AG04450 (cell line): ENCODE measurements at regions of chr1 and their contacts with region 1.

Region 1: DNA sequence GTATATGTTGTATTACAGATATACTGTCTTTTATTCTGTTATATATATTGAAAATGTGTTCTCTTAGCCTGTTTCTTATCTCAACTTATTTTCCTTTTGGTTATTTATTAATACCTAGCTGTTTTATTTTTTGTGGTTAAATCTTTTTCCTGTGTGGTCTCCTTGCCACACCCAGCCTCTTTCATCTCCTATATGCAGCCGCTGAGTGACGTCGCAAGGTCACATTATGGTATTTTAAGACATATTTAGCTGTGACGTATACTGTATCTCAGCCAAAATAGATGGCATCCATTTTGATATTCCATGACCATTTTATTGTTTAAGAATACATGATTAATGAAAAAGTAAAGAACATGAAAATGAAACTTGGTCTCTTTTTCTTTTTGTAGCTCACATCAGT is 29.1 kb downstream of the CENPF start:
- DNase-seq: no peak
- H3K4me3 ChIP-seq: no peak overlapping the region
- H3K27ac ChIP-seq: no peak overlapping the region
- H3K27me3 ChIP-seq: no peaks in the 10 kb centered on the region
- CTCF ChIP-seq: no peak

Region 2: DNA sequence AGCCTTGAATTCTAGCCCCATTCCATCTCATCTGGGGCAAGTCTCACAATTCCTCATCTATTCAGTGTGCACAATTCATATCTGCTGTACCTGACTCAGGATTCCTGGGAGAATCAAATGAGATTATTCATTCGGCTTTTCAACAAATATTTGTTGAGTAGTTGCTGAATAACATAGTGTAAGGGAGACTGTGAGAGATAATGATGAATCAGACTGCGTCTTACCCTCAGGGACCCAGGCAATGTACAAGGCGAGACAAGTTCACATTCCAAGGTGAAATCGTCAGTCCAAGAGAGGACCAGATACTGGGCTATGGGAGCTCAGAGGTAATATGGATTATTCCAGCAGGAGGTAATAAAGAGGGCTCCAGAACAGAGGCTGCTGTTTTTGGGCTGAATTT is 419.0 kb before region 1 on chr1:
- CTCF ChIA-PET with region 1: interaction called, 12 read pairs
- POLR2A ChIA-PET with region 1: no interaction called
- DNase-seq: no peak
- H3K4me3 ChIP-seq: no peak overlapping the region
- H3K27ac ChIP-seq: no peak overlapping the region
- H3K27me3 ChIP-seq: peaks cover 15% of the 10 kb centered on the region
- CTCF ChIP-seq: no peak

Region 3: GRCh38 chr1:214660862-214661261 is 28.8 kb after region 1 on chr1:
- CTCF ChIA-PET with region 1: interaction called, 28 read pairs
- POLR2A ChIA-PET with region 1: no interaction called
- DNase-seq: peak; percentile 84
- H3K4me3 ChIP-seq: no peak overlapping the region
- H3K27ac ChIP-seq: no peak overlapping the region
- H3K27me3 ChIP-seq: no peaks in the 10 kb centered on the region
- CTCF ChIP-seq: peak; percentile 88

Region 4: GRCh38 chr1:214707306-214708087 is 75.4 kb after region 1 on chr1:
- CTCF ChIA-PET with region 1: no interaction called
- POLR2A ChIA-PET with region 1: no interaction called
- DNase-seq: no peak
- H3K4me3 ChIP-seq: no peak overlapping the region
- H3K27ac ChIP-seq: peak overlapping the region; percentile 24
- H3K27me3 ChIP-seq: no peaks in the 10 kb centered on the region
- CTCF ChIP-seq: no peak

Region 5: GRCh38 chr1:215606564-215607168 is 974.6 kb after region 1 on chr1:
- CTCF ChIA-PET with region 1: no interaction called
- POLR2A ChIA-PET with region 1: no interaction called
- DNase-seq: no peak
- H3K4me3 ChIP-seq: no peak overlapping the region
- H3K27ac ChIP-seq: no peak overlapping the region
- H3K27me3 ChIP-seq: no peaks in the 10 kb centered on the region
- CTCF ChIP-seq: peak; percentile 47